Heart left ventricle (tissue), 16 donors: ENCODE measurements at regions of chr4 and their contacts with region 1.

Region 1: GRCh38 chr4:92618968-92619367 is 315.2 kb downstream of the GRID2 start:
- DNase-seq: no peak
- ATAC-seq: no peak
- H3K4me3 ChIP-seq: no peak overlapping the region
- H3K27ac ChIP-seq: no peak overlapping the region
- H3K4me1 ChIP-seq: no peaks in the 10 kb centered on the region
- H3K27me3 ChIP-seq: no peaks in the 10 kb centered on the region
- CTCF ChIP-seq: no peak
- POLR2A ChIP-seq: no peak

Region 2: DNA sequence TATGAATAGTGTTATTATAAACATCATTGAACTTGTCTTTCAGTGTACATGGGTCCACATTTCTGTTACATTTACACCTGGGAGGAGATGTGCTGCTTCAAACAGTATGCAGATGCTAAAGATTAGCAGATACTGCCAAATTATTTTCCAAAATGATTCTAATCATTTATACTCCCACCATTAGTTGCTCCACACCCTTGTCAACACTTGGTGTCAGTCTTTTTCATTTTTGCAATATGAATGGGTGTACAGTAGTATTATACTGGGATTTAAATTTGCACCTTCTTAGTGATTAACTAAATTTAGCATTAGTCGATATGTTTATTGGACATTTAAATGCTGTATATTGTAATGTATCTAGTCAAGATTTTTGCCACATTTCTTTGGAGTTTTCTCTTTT is 446.8 kb before region 1 on chr4:
- intact Hi-C with region 1: loop called in 1 of 10 experiments (anchors 5 kb)
- DNase-seq: no peak
- ATAC-seq: no peak
- H3K4me3 ChIP-seq: no peak overlapping the region
- H3K27ac ChIP-seq: no peak overlapping the region
- H3K4me1 ChIP-seq: no peaks in the 10 kb centered on the region
- H3K27me3 ChIP-seq: no peaks in the 10 kb centered on the region
- CTCF ChIP-seq: no peak
- POLR2A ChIP-seq: no peak

Region 3: GRCh38 chr4:92520563-92520962 is 98.4 kb before region 1 on chr4:
- intact Hi-C with region 1: no loop called
- DNase-seq: no peak
- ATAC-seq: no peak
- H3K4me3 ChIP-seq: no peak overlapping the region
- H3K27ac ChIP-seq: no peak overlapping the region
- H3K4me1 ChIP-seq: no peaks in the 10 kb centered on the region
- H3K27me3 ChIP-seq: no peaks in the 10 kb centered on the region
- CTCF ChIP-seq: no peak
- POLR2A ChIP-seq: no peak

Region 4: DNA sequence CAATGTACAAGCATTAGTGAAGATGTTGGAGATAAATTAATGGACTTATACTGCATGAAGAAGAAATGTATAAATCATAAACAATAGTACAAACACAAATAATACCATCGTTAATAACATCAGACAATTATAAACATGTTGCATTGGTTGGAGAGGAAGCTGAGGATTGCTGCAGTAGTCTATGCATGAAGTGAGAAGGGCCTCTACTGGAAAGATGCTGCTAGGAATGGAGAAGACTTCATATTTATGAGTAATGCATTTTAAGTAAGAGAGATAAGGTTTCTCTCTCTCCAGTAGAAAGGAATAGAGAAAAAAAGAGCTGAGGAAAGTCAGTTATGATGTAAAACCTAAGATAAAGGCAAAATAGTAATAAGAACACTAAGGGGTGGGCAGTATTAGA is 67.4 kb before region 1 on chr4:
- intact Hi-C with region 1: no loop called
- DNase-seq: no peak
- ATAC-seq: no peak
- H3K4me3 ChIP-seq: no peak overlapping the region
- H3K27ac ChIP-seq: no peak overlapping the region
- H3K4me1 ChIP-seq: no peaks in the 10 kb centered on the region
- H3K27me3 ChIP-seq: no peaks in the 10 kb centered on the region
- CTCF ChIP-seq: no peak
- POLR2A ChIP-seq: no peak

Region 5: GRCh38 chr4:92606227-92606626 is 12.7 kb before region 1 on chr4:
- intact Hi-C with region 1: no loop called
- DNase-seq: no peak
- ATAC-seq: no peak
- H3K4me3 ChIP-seq: no peak overlapping the region
- H3K27ac ChIP-seq: no peak overlapping the region
- H3K4me1 ChIP-seq: no peaks in the 10 kb centered on the region
- H3K27me3 ChIP-seq: no peaks in the 10 kb centered on the region
- CTCF ChIP-seq: no peak
- POLR2A ChIP-seq: no peak

Region 6: DNA sequence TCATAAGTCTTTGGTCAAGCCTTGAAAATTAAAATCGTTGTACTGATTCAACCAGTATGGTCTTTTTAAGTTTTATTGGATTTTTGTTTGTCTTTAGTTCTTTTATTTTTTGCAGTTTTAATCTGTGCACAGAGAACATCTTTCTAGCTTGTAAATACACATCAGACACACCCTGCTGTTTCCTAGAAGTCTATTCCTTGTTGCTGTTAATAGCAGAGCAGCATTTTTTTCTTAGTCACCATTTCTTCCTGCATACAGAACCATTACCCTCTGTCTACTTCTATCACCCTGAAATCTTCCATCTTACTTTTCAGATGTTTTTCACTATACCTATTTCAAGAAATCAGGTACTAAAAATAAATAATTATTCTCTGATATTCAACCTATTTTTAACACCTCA is 60.2 kb after region 1 on chr4:
- intact Hi-C with region 1: no loop called
- DNase-seq: no peak
- ATAC-seq: no peak
- H3K4me3 ChIP-seq: no peak overlapping the region
- H3K27ac ChIP-seq: no peak overlapping the region
- H3K4me1 ChIP-seq: no peaks in the 10 kb centered on the region
- H3K27me3 ChIP-seq: no peaks in the 10 kb centered on the region
- CTCF ChIP-seq: no peak
- POLR2A ChIP-seq: no peak